ENCODE measurements at regions of chr2 and their contacts with region 1.

Region 1: DNA sequence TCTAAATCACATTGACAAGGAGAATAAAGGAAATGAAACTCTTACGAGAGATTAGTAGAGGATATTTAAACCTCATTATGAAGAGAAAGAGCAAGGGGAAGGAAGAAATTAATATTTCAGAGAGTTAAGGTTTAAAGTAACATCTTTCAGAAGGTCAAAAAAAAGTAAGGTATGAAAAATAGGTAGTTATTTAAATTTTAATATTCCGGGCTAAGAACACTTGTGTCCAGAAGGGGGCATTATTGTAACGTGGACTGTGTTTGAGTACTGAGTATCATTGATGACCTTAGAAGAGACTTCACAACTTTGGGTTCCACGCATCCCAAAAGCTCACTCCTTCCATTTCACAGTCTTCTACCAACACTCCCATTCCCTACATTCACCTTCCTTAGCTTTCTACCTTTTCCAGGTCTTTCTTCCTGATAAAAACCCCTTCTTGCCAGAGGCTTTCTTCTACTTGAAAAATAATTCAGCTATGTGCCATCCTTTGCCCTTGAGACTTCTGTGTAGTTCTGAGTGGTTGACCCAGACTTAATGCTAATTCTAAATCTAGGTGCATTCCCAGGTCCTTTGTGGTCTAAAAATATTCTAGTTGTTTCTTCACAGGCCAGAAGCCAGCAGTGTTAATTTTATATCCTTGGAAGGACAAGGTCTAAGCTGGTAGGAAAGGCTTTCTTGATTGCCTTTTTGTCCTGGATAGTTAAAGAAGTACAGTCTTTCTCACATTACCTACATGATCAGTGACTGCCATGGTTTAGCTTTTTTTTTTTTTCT is 16.5 kb downstream of the DYNC1I2 start:
- DNase-seq: peak; percentile 10 to 59
- H3K4me3 ChIP-seq: no peak overlapping the region
- H3K27ac ChIP-seq: peak overlapping the region; percentile 18; the same call in 1 of the 2 replicates
- H3K4me1 ChIP-seq: no peaks in the 10 kb centered on the region
- H3K27me3 ChIP-seq: no peaks in the 10 kb centered on the region
- CTCF ChIP-seq: peak; percentile 85

Region 2: DNA sequence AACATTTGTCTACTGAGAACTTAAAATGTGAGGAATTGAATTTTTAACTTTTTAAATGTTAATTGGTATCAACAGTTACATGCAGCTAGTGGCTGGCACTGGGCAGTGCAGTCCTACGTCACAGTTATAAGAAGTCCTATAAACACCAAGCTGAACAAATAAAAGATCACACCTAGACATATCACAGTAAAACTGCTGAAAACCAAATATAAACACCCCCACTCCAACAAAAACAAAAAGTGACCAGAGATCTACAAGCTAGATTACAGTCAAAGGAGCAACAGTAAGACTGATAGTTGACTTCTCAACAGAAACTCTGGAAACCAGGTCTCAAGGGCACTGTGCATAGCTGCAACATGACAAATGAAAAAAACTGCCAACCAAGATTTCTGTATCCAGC is 562.4 kb before region 1 on chr2:
- CTCF ChIA-PET with region 1: no interaction called
- POLR2A ChIA-PET with region 1: no interaction called
- intact Hi-C with region 1: no loop called
- DNase-seq: no peak
- H3K4me3 ChIP-seq: no peak overlapping the region
- H3K27ac ChIP-seq: no peak overlapping the region
- H3K4me1 ChIP-seq: peaks cover 3% of the 10 kb centered on the region
- H3K27me3 ChIP-seq: no peaks in the 10 kb centered on the region
- CTCF ChIP-seq: no peak

Region 3: GRCh38 chr2:171798252-171798741 is 94.5 kb after region 1 on chr2:
- CTCF ChIA-PET with region 1: no interaction called
- POLR2A ChIA-PET with region 1: no interaction called
- intact Hi-C with region 1: loop called (anchors 5 kb)
- DNase-seq: peak in 1 of 2 experiments; percentile 58
- H3K4me3 ChIP-seq: no peak overlapping the region
- H3K27ac ChIP-seq: peak overlapping the region; percentile 21
- H3K4me1 ChIP-seq: peaks cover 20% of the 10 kb centered on the region
- H3K27me3 ChIP-seq: no peaks in the 10 kb centered on the region
- CTCF ChIP-seq: no peak

Region 4: DNA sequence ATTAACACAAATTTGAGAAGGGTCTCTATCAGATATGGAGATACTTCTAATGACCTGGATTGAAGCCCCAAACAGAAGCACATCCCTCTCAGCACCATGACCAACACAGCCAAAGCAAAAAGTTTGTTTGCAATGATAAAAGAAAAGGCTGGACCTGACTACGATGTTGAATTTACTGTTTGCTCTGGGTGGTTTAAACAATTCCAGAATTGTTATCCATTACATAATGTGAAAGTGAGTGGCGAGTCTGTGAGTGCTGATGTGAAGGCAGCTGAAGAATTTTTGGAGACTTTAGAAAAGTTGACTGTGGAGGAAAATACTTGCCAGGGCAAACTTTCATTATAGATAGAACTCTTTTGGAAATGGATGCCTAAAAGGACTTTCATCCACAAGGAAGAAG is 416.4 kb after region 1 on chr2:
- CTCF ChIA-PET with region 1: interaction called, 10 read pairs
- POLR2A ChIA-PET with region 1: interaction called, 4 read pairs
- intact Hi-C with region 1: no loop called
- DNase-seq: no peak
- H3K4me3 ChIP-seq: no peak overlapping the region
- H3K27ac ChIP-seq: peak overlapping the region; percentile 88
- H3K4me1 ChIP-seq: peaks cover 43% of the 10 kb centered on the region
- H3K27me3 ChIP-seq: no peaks in the 10 kb centered on the region
- CTCF ChIP-seq: no peak

Measured in PC-9 (cell line).